CD8-positive, alpha-beta T cell (primary cell): ENCODE measurements at regions of chr1 and their contacts with region 1.

Region 1: DNA sequence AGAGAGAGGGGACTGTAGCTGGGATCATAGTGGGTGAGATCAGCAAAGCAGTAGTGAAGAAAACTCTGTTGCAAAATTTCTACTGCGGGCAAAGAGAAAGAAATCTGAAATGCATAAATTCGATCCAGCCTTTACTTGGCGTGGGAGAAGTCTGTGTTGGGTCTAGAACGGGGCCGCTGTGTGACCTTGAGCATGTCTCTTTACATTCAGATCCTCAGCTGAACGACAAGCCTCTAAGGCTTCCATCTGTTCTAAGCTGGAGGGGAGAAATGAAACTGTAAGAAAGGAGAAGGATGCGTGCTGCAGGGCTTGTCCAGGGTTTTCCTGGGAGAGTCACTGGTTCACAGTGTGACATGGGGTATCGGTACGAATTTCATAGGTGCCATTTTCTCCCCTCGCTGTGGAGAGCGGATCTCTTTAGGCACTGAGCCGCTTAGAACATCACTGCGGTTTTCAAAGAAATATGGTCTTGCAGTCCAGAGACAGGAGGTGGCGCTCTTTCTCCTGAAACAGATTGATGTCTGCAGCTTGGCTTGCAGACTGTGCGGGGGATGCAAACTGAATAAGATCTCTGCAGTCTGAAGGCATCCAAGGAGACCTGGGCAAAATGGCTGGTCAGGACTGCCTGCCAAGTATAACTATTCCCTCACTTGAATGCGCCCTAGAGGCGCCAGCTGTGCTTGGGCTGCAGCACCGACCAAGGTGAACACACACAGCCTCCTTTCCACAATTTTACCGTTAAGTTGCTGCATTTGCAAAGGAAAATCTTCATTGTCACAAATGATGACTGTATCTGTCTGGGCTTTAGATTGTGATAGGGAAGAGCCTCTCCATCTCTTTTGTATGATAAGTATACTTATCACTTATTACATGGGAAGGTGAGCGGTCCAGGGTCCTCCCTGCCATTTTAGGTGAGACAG is 104.1 kb downstream of the XCL2 start:
- DNase-seq: peak; percentile 69 to 92 (median 84)
- ATAC-seq: peak; percentile 88
- H3K4me3 ChIP-seq: peak overlapping the region; percentile 21 to 29
- H3K4me3 Mint-ChIP-seq: peak overlapping the region; percentile 83
- H3K27ac ChIP-seq: peak overlapping the region in 1 of 2 experiments; percentile 53
- H3K27ac Mint-ChIP-seq: peak overlapping the region; percentile 90
- H3K4me1 ChIP-seq: peaks cover 46% of the 10 kb centered on the region
- H3K4me1 Mint-ChIP-seq: peaks cover 58% of the 10 kb centered on the region
- H3K27me3 ChIP-seq: no peaks in the 10 kb centered on the region
- H3K27me3 Mint-ChIP-seq: no peaks in the 10 kb centered on the region
- CTCF ChIP-seq: peak; percentile 70

Region 2: GRCh38 chr1:166796620-166797236 is 1643.0 kb before region 1 on chr1:
- CTCF ChIA-PET with region 1: no interaction called
- POLR2A ChIA-PET with region 1: no interaction called
- intact Hi-C with region 1: no loop called
- DNase-seq: no peak
- ATAC-seq: no peak
- H3K4me3 ChIP-seq: no peak overlapping the region
- H3K4me3 Mint-ChIP-seq: no peak overlapping the region
- H3K27ac ChIP-seq: no peak overlapping the region
- H3K27ac Mint-ChIP-seq: no peak overlapping the region
- H3K4me1 ChIP-seq: no peaks in the 10 kb centered on the region
- H3K4me1 Mint-ChIP-seq: no peaks in the 10 kb centered on the region
- H3K27me3 ChIP-seq: no peaks in the 10 kb centered on the region
- H3K27me3 Mint-ChIP-seq: peaks cover 16% of the 10 kb centered on the region
- CTCF ChIP-seq: no peak

Region 3: DNA sequence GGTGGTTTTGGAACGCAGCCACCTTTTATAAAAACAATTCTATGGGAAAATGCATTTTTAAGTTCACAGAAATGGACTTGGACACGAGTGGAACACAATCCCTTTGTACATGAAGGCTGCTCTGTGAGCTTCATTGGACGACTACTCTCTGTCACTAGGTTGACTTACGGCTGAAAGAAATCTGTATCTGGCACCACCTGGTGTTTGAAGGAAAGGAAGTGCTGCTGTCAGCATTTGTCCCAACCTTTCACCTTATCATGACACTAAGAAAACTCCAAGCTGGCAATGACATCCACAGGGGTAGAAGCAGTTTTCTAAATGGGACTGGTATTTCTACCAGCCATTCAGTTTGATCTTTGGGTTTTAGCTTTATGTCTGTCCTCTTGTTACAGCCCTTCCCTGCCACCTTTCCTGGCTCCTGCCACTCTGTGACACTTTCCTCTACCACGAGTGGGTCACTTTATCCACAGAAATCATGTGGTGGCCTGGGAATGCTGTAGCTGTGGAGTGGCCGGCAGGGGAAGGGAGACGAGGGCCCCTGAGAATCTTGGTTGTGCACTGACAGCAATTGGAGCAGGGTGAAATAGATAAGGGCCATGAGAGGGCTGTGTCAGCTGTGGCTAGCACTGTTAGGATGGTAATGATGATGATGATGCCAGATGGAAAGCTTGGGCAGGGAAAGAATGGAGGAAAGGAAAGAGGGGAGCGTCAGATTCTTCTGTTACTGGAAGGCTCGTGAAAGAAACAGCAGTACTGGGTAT is 73.8 kb before region 1 on chr1:
- CTCF ChIA-PET with region 1: interaction called, 3 read pairs
- POLR2A ChIA-PET with region 1: no interaction called
- intact Hi-C with region 1: loop called (anchors 2 kb)
- DNase-seq: peak in 2 of 9 experiments; percentile 53 to 57
- ATAC-seq: no peak
- H3K4me3 ChIP-seq: no peak overlapping the region
- H3K4me3 Mint-ChIP-seq: no peak overlapping the region
- H3K27ac ChIP-seq: no peak overlapping the region
- H3K27ac Mint-ChIP-seq: no peak overlapping the region
- H3K4me1 ChIP-seq: peaks cover 24% of the 10 kb centered on the region
- H3K4me1 Mint-ChIP-seq: peaks cover 30% of the 10 kb centered on the region
- H3K27me3 ChIP-seq: no peaks in the 10 kb centered on the region
- H3K27me3 Mint-ChIP-seq: no peaks in the 10 kb centered on the region
- CTCF ChIP-seq: no peak

Region 4: GRCh38 chr1:168452329-168452728 is 12.6 kb after region 1 on chr1:
- CTCF ChIA-PET with region 1: interaction called, 18 read pairs
- POLR2A ChIA-PET with region 1: interaction called, 3 read pairs
- intact Hi-C with region 1: no loop called
- DNase-seq: no peak
- ATAC-seq: no peak
- H3K4me3 ChIP-seq: no peak overlapping the region
- H3K4me3 Mint-ChIP-seq: no peak overlapping the region
- H3K27ac ChIP-seq: no peak overlapping the region
- H3K27ac Mint-ChIP-seq: no peak overlapping the region
- H3K4me1 ChIP-seq: peaks cover 7% of the 10 kb centered on the region
- H3K4me1 Mint-ChIP-seq: peaks cover 30% of the 10 kb centered on the region
- H3K27me3 ChIP-seq: no peaks in the 10 kb centered on the region
- H3K27me3 Mint-ChIP-seq: no peaks in the 10 kb centered on the region
- CTCF ChIP-seq: no peak

Region 5: DNA sequence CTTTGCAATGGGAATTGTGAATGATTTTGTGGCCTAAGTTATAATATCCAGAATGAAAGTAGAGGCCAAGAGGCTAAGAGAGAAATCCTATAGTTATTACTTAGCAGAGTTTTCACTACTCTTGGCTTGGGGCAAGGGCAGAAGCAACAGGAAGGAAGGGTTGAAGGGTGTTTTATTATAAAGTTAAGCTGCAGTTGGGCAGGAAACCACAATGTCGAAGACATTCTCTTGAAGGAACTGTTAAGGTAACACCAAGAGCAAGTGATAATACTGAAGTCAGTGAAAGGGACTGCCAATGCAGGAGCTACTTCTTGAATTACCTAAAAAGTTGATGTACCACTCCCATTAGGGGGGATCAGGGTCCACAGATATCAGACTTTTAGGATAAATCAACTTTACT is 95.8 kb after region 1 on chr1:
- CTCF ChIA-PET with region 1: interaction called, 22 read pairs
- POLR2A ChIA-PET with region 1: interaction called, 8 read pairs
- intact Hi-C with region 1: loop called in 1 of 2 experiments (anchors 1 kb)
- DNase-seq: peak in 3 of 9 experiments; percentile 40 to 84 (median 71)
- ATAC-seq: peak; percentile 79
- H3K4me3 ChIP-seq: peak overlapping the region; percentile 13 to 19
- H3K4me3 Mint-ChIP-seq: peak overlapping the region; percentile 54
- H3K27ac ChIP-seq: peak overlapping the region; percentile 37 to 77
- H3K27ac Mint-ChIP-seq: peak overlapping the region; percentile 83
- H3K4me1 ChIP-seq: peaks cover 66% of the 10 kb centered on the region
- H3K4me1 Mint-ChIP-seq: peaks cover 90% of the 10 kb centered on the region
- H3K27me3 ChIP-seq: no peaks in the 10 kb centered on the region
- H3K27me3 Mint-ChIP-seq: no peaks in the 10 kb centered on the region
- CTCF ChIP-seq: no peak

Region 6: GRCh38 chr1:168582693-168583336 is 143.1 kb after region 1 on chr1:
- CTCF ChIA-PET with region 1: interaction called, 12 read pairs
- POLR2A ChIA-PET with region 1: interaction called, 3 read pairs
- intact Hi-C with region 1: no loop called
- DNase-seq: no peak
- ATAC-seq: no peak
- H3K4me3 ChIP-seq: no peak overlapping the region
- H3K4me3 Mint-ChIP-seq: no peak overlapping the region
- H3K27ac ChIP-seq: no peak overlapping the region
- H3K27ac Mint-ChIP-seq: no peak overlapping the region
- H3K4me1 ChIP-seq: no peaks in the 10 kb centered on the region
- H3K4me1 Mint-ChIP-seq: peaks cover 4% of the 10 kb centered on the region
- H3K27me3 ChIP-seq: no peaks in the 10 kb centered on the region
- H3K27me3 Mint-ChIP-seq: no peaks in the 10 kb centered on the region
- CTCF ChIP-seq: no peak

Region 7: GRCh38 chr1:169106095-169106920 is 666.6 kb after region 1 on chr1 and contains the start of gene ATP1B1:
- CTCF ChIA-PET with region 1: no interaction called
- POLR2A ChIA-PET with region 1: no interaction called
- intact Hi-C with region 1: loop called (anchors 5 to 10 kb)
- DNase-seq: peak; percentile 59 to 88 (median 78)
- ATAC-seq: peak; percentile 89
- H3K4me3 ChIP-seq: peak within 1 kb of the TSS; percentile 65 to 74
- H3K4me3 Mint-ChIP-seq: peak within 1 kb of the TSS; percentile 91
- H3K27ac ChIP-seq: no peak within 1 kb of the TSS
- H3K27ac Mint-ChIP-seq: peak within 1 kb of the TSS; percentile 23
- H3K4me1 ChIP-seq: peaks cover 24% of the 10 kb centered on the region
- H3K4me1 Mint-ChIP-seq: peaks cover 33% of the 10 kb centered on the region
- H3K27me3 ChIP-seq: peaks cover 0 to 2% of the 10 kb centered on the region in 2 experiments
- H3K27me3 Mint-ChIP-seq: peaks cover 4% of the 10 kb centered on the region
- CTCF ChIP-seq: peak; percentile 29
- total RNA-seq, gene ATP1B1: 2.6 to 3.0 TPM

Region 8: DNA sequence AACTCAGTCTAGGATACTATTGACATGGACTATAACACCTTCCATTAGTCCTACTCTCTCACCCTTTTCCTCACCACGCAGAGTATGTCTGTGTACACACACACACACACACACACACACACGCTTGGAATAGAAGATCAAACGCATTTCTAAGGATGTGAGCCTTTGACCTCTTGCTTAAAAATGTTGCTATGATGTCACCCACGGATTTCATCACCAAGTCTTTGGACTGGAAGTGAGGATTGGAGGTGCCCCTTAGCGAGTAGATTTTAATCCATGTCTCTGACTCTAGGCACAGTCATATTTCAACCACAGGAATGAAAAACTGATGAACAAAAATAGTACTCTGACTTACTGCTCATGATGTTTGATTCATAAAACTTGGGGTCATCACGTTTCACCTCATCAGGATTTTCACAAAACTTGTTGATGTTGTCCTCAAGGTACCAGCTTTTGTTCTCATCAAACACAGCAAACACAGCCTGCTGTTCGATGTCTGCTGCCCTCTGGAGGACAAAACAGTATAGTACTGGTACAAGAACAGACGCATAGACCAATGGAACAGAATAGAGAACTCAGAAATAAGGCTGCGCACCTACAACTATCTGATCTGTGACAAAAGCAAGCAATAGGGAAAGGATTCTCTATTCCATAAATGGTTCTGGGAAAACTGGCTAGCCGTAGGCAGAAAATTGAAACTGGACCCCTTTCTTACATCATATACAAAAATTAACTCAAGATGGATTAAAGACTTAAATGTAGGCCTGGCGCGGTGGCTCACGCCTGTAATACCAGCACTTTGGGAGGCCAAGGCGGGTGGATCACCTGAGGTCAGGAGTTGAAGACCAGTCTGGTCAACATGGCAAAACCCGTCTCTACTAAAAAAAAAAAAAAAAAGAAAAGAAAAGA is 1106.6 kb after region 1 on chr1:
- CTCF ChIA-PET with region 1: interaction called, 4 read pairs
- POLR2A ChIA-PET with region 1: no interaction called
- intact Hi-C with region 1: loop called in 1 of 2 experiments (anchors 5 kb)
- DNase-seq: peak in 8 of 9 experiments; percentile 26 to 85 (median 52)
- ATAC-seq: peak; percentile 85
- H3K4me3 ChIP-seq: no peak overlapping the region
- H3K4me3 Mint-ChIP-seq: no peak overlapping the region
- H3K27ac ChIP-seq: no peak overlapping the region
- H3K27ac Mint-ChIP-seq: no peak overlapping the region
- H3K4me1 ChIP-seq: no peaks in the 10 kb centered on the region
- H3K4me1 Mint-ChIP-seq: no peaks in the 10 kb centered on the region
- H3K27me3 ChIP-seq: no peaks in the 10 kb centered on the region
- H3K27me3 Mint-ChIP-seq: no peaks in the 10 kb centered on the region
- CTCF ChIP-seq: peak; percentile 82